ENCODE measurements at regions of chr1 and their contacts with region 1.

Region 1: DNA sequence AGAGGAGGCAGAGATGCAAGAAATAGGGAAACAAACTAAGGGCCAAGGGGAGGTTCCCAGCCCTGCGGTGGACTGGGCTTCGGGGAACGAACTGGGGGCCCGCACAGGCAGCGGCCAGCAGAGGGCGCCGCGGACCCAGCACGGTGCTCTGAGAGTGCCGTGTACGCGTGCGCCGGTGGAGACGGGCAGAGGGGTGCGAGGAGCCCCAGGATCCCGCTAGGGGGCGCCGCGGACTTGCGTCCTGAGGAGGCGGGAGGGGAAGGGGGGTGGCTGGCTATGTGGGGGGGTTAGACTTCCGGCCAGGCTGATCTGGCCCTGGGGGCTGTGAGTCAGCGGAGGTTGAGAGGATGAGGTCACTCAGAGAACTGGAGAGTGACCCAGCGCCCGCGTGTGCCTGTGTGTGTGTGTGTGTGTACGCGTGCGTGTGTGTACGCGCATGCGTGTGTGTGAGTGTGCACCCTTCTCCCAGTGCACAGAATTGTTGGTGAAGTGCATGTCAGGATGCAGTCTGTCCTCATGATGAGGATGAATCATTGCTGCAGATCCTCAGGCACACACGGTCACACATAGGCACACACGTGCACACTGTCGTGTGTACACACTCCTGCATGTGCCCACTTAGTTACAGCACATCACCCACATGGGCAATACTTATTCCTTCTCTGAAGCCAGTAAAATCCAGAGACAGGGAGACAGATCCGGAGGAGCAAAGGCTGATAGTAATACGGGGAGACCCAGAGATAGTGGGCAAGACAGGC is 17.0 kb downstream of the NES start:
- DNase-seq: peak; percentile 99
- CTCF ChIP-seq: peak; percentile 99

Region 2: GRCh38 chr1:156608036-156608674 is 52.0 kb before region 1 on chr1:
- CTCF ChIA-PET with region 1: interaction called, 11 read pairs
- POLR2A ChIA-PET with region 1: no interaction called
- DNase-seq: peak; percentile 70
- CTCF ChIP-seq: peak; percentile 74

Region 3: DNA sequence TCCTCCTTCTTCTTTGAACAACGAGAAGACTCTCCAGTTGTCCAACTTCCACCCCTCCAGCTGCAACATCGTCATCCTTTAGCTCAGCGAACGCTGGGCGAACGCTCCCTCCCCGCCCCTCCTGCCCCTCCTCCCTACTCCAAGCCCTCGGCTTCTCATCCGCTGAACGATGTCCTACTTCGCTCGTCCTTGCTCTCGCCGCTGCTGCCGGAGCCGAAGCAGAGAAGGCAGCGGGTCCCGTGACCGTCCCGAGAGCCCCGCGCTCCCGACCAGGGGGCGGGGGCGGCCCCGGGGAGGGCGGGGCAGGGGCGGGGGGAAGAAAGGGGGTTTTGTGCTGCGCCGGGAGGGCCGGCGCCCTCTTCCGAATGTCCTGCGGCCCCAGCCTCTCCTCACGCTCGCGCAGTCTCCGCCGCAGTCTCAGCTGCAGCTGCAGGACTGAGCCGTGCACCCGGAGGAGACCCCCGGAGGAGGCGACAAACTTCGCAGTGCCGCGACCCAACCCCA is 18.4 kb before region 1 on chr1 and contains the start of gene BCAN:
- CTCF ChIA-PET with region 1: interaction called, 22 read pairs
- POLR2A ChIA-PET with region 1: interaction called, 8 read pairs
- DNase-seq: peak; percentile 66
- CTCF ChIP-seq: peak; percentile 8

Region 4: GRCh38 chr1:156689035-156689952 is 29.1 kb after region 1 on chr1:
- CTCF ChIA-PET with region 1: interaction called, 431 read pairs
- POLR2A ChIA-PET with region 1: no interaction called
- DNase-seq: peak; percentile 87
- CTCF ChIP-seq: peak; percentile 87

Region 5: GRCh38 chr1:156697481-156697880 is 37.3 kb after region 1 on chr1:
- CTCF ChIA-PET with region 1: interaction called, 431 read pairs
- POLR2A ChIA-PET with region 1: no interaction called
- DNase-seq: no peak
- CTCF ChIP-seq: no peak

Region 6: DNA sequence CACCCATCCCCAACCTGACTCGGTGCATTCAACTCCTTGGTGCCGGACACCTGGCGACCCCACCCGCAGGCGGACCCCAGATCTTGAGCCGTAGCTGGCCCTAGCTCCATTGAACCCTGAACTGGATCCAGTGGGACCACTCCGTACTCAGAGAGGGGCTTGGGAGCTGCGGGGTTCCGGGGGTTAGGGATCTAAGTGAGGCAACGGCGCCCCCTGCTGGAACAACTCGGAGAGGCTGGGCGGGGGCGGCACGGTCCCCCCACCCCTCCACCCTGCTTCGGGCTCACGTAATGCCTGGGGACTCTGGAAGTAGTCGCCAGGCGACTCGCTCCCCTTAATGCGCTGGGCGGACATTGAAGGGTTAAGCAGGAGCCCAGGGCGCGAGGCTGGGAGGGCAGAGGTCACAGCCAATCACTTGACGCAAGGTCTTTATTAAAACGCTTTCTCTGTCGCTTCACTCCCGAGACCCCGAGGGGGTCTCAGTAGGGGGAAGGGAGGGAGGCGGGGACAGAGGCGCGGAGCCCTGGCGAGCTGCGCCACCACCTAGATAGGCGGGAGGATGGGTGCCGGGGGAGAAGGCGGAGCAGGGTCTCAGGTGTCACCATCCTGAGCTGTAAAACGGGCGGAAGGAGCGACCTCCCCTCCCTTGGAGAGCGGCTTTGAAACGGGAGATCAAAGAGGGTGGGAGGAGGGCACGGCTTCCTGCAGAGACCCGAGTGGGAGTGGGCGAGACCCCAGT is 45.9 kb after region 1 on chr1:
- CTCF ChIA-PET with region 1: interaction called, 69 read pairs
- POLR2A ChIA-PET with region 1: interaction called, 7 read pairs
- DNase-seq: peak; percentile 88
- CTCF ChIP-seq: peak; percentile 67

Region 7: DNA sequence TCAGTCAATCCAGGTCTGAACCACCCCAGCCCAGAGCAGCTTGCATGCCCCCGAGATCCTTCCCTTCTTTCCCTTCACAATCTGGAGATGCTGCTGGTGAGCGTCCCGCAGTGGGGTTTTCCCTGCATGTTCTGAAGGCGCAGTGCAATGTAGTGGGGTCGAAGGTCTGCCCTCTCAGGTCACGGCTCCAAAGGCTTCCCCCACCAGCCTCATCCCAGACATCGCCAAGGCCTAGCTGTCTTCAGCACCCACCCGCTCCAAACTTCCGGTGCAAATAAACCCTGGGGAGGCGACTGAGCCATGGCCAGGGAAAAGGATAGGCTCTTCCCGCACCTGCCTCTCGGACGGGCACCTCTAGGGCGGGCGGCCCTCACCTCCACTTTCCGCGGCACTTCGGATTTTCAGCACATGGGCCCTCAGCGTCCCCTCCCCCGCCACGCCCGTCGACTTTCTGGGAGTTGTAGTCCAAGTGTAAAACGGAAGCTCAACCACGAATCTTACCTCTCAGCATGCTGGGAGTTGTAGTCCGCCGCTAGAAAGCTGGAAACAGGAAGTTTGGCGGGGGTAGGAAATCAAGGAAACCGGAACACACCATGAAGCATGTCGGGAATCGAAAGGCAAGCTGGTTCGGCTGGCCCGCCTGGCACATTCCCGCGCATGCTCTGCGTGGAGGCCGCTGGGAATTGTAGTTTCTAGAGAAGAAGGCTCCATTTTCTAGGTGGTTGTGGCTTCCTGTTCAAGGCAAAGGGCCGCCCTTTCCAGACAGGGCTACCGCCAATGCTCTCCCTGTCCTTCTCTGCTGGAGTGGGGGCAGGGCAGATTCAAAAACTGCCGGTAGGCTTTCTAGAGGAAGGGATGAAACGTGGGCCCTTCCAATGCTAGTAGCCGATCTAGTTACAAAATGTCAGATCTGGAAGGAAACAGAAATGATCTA is 80.8 kb after region 1 on chr1 and contains the start of gene MRPL24:
- CTCF ChIA-PET with region 1: no interaction called
- POLR2A ChIA-PET with region 1: no interaction called
- DNase-seq: peak; percentile 93
- CTCF ChIP-seq: no peak

Measured in GM10248 (cell line).